Naive thymus-derived CD4-positive, alpha-beta T cell (primary cell): ENCODE measurements at regions of chr14 and their contacts with region 1.

Region 1: DNA sequence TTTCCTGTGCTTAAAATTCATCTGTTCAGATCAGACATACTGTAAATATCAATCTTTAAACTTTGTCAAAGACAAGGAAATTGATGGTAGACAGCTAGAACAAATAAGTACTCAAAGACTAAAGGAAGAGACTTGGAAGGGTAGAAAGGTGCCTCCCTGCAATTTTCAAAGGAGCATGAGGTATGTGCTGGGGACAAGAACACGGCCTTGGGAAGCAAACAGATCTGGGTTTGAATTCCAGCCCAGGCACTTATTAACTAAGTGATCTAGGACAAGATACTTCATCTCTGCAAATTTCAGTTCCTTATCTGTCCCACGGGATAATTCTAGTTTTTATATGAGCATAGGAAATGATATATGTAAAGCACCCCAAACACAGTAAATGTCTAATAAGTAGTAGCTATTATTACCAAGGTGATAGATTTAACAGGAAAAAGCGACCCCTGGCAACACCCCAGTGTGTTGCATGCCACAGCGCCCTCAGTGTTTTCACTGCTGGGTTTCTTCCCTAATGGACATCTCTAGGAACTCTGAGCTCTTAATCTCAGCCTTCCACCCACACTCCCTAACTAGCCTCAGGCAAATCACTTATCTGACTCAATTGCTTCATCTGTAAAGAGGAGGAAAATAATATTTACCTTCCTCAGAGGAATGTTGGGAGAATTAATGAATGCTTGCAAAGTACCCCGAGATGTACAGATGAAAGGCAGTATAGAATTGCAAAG is 44.7 kb upstream of the BMP4 start:
- DNase-seq: no peak
- ATAC-seq: no peak
- H3K4me3 ChIP-seq: no peak overlapping the region
- H3K4me3 Mint-ChIP-seq: no peak overlapping the region
- H3K27ac ChIP-seq: no peak overlapping the region
- H3K27ac Mint-ChIP-seq: no peak overlapping the region
- H3K4me1 ChIP-seq: no peaks in the 10 kb centered on the region
- H3K4me1 Mint-ChIP-seq: no peaks in the 10 kb centered on the region
- H3K27me3 ChIP-seq: no peaks in the 10 kb centered on the region
- H3K27me3 Mint-ChIP-seq: peaks cover 0 to 3% (median 0%) of the 10 kb centered on the region in 5 donors

Region 2: DNA sequence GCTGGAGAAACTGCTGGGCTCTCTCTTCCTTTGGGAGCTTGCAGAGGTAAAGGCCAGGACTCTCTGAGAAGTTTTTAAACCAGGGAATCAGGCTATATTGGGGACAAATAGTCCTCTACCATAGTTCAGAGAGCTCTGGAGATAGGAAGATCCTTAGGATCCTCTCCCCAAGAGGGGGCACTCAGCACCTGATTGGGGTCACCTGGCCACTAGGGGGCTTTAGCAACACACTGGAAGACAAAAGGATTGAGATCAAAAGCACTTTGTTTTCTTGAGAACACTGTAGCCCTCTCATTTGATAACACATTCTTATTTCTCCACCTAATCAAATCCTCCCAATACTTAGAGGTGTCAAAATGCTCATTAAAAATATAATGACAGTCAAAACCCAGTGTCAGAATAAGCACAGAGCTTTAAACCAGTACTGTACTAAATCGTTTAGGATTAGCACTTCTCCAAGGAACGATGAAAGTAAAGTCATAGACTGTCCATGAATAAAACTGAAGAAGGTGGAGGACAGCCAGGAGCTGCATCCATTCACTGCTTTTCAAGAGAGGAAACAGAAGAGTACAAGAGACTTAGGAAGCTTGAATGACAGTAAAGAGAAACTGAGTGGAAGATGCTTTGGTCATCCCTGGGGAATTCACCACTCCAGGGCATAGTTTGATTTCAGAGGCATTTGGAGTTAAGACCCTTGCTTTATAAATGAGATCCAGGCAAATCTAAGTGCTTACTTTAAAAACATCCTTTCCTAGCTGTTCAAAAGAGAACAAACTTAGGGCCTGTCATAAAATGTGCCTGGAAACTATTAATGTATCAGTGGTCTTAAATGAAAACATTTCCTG is 71.3 kb before region 1 on chr14:
- CTCF ChIA-PET with region 1: no interaction called
- POLR2A ChIA-PET with region 1: no interaction called
- intact Hi-C with region 1: loop called in 1 of 2 experiments (anchors 1 kb)
- DNase-seq: peak in 3 of 9 donors; percentile 14 to 47 (median 29)
- ATAC-seq: no peak
- H3K4me3 ChIP-seq: no peak overlapping the region
- H3K4me3 Mint-ChIP-seq: no peak overlapping the region
- H3K27ac ChIP-seq: no peak overlapping the region
- H3K27ac Mint-ChIP-seq: no peak overlapping the region
- H3K4me1 ChIP-seq: no peaks in the 10 kb centered on the region
- H3K4me1 Mint-ChIP-seq: no peaks in the 10 kb centered on the region
- H3K27me3 ChIP-seq: no peaks in the 10 kb centered on the region
- H3K27me3 Mint-ChIP-seq: peaks cover 8 to 26% (median 11%) of the 10 kb centered on the region in 5 donors